Naive thymus-derived CD4-positive, alpha-beta T cell (primary cell): ENCODE measurements at regions of chrX and their contacts with region 1.

Region 1: DNA sequence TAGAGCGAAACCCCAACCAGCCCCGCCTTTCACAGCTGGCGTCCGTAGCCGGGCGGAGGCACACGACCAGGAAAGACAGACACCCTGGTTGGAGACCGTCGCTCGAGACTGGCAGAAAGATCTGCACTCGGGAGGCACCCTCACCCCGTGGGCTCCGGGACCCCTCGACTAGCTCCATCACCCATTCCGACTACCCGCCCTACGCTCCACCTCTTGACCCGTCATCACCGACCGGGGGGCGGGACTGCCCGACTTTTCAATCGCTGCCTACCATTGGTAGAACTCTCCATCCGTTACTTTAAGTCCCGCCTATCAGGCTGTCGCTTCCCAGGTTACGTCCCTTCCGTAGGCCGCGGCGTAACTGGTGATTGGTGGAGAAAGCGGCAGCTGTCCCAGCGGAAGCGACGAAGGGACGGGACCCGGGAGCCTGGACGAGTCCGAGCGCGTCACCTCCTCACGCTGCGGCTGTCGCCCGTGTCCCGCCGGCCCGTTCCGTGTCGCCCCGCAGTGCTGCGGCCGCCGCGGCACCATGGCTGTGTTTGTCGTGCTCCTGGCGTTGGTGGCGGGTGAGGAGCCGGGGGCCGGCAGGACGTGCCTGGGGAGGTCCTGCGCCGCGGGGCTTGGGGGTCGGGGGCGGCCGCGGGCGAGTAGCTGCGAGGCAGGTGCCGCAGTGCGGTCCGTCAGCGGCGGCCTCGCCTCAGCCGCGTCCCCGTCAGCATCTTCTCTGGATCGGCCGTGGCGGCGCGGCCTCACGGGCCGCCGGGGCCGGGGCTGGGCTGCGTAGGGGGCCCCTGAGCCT is at the start of gene ATP6AP2:
- DNase-seq: peak; percentile 60 to 91 (median 88)
- ATAC-seq: peak; percentile 96
- H3K4me3 ChIP-seq: peak within 1 kb of the TSS; percentile 81
- H3K4me3 Mint-ChIP-seq: peak within 1 kb of the TSS; percentile 92 to 98 (median 94)
- H3K27ac ChIP-seq: peak within 1 kb of the TSS; percentile 90
- H3K27ac Mint-ChIP-seq: peak within 1 kb of the TSS; percentile 87 to 96 (median 95)
- H3K4me1 ChIP-seq: peaks cover 13 to 16% of the 10 kb centered on the region in 2 donors
- H3K4me1 Mint-ChIP-seq: peaks cover 21 to 38% (median 34%) of the 10 kb centered on the region in 7 donors
- H3K27me3 ChIP-seq: no peaks in the 10 kb centered on the region
- H3K27me3 Mint-ChIP-seq: no peaks in the 10 kb centered on the region
- total RNA-seq, gene ATP6AP2: 72.0 to 98.6 (median 82.5) TPM

Region 2: DNA sequence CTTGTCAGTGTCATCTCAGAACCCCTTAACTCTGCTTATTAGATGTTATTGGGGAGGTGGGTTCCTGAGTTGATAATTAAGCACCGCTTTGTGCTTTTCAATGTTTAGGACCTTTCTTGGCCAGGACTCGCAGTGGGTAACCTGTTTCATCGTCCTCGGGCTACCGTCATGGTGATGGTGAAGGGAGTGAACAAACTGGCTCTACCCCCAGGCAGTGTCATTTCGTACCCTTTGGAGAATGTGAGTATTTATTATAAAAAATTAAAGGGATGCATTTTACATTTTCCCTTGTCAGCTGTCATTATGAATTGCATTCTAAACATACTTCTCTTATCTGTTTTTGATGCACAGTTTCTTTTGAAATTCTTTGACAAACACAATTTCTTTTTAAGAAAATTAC is 10.4 kb after region 1 on chrX:
- CTCF ChIA-PET with region 1: no interaction called
- POLR2A ChIA-PET with region 1: interaction called, 3 read pairs
- intact Hi-C with region 1: loop called (anchors 1 kb)
- DNase-seq: no peak
- ATAC-seq: no peak
- H3K4me3 ChIP-seq: no peak overlapping the region
- H3K4me3 Mint-ChIP-seq: no peak overlapping the region
- H3K27ac ChIP-seq: no peak overlapping the region
- H3K27ac Mint-ChIP-seq: no peak overlapping the region
- H3K4me1 ChIP-seq: peaks cover 0 to 12% of the 10 kb centered on the region in 2 donors
- H3K4me1 Mint-ChIP-seq: peaks cover 8 to 52% (median 31%) of the 10 kb centered on the region in 7 donors
- H3K27me3 ChIP-seq: no peaks in the 10 kb centered on the region
- H3K27me3 Mint-ChIP-seq: no peaks in the 10 kb centered on the region